ENCODE measurements at regions of chr9 and their contacts with region 1.

Region 1: GRCh38 chr9:111298731-111299598 is 31.1 kb downstream of the OR2K2 start:
- DNase-seq: peak; percentile 21
- H3K4me3 Mint-ChIP-seq: no peak overlapping the region
- H3K27ac Mint-ChIP-seq: no peak overlapping the region
- H3K4me1 Mint-ChIP-seq: no peaks in the 10 kb centered on the region
- H3K27me3 Mint-ChIP-seq: no peaks in the 10 kb centered on the region
- CTCF ChIP-seq: peak; percentile 46

Region 2: DNA sequence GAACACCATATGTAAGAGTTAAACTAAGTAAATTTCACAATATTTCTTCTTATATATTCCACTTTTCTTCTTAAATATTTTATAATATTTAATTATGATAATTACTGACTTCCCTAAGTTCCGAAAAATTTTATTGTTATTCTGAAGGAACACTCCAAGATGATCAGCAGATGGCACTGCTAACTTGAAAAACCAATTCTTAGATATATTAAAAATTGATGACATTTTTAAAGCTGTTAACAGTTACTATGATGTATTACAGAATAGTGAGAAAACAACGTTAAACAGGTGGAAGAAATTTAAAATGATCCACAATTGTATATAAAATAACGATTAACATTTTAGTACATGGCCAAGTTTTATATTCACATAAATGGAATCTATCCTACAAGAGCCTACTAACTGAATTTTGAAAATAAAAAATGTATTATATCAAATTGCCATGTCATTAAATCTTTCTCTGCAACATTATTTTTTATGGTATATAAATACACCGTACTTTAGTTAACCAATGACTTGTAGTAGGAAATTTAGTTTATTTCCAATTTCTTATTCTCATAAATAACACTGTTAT is 660.5 kb before region 1 on chr9:
- CTCF ChIA-PET with region 1: no interaction called
- intact Hi-C with region 1: loop called (anchors 1 kb)
- DNase-seq: no peak
- H3K4me3 Mint-ChIP-seq: no peak overlapping the region
- H3K27ac Mint-ChIP-seq: no peak overlapping the region
- H3K4me1 Mint-ChIP-seq: no peaks in the 10 kb centered on the region
- H3K27me3 Mint-ChIP-seq: no peaks in the 10 kb centered on the region
- CTCF ChIP-seq: no peak

Region 3: GRCh38 chr9:110842169-110842568 is 456.8 kb before region 1 on chr9:
- CTCF ChIA-PET with region 1: no interaction called
- intact Hi-C with region 1: loop called (anchors 10 kb)
- DNase-seq: no peak
- H3K4me3 Mint-ChIP-seq: no peak overlapping the region
- H3K27ac Mint-ChIP-seq: no peak overlapping the region
- H3K4me1 Mint-ChIP-seq: peaks cover 10% of the 10 kb centered on the region
- H3K27me3 Mint-ChIP-seq: no peaks in the 10 kb centered on the region
- CTCF ChIP-seq: no peak

Region 4: DNA sequence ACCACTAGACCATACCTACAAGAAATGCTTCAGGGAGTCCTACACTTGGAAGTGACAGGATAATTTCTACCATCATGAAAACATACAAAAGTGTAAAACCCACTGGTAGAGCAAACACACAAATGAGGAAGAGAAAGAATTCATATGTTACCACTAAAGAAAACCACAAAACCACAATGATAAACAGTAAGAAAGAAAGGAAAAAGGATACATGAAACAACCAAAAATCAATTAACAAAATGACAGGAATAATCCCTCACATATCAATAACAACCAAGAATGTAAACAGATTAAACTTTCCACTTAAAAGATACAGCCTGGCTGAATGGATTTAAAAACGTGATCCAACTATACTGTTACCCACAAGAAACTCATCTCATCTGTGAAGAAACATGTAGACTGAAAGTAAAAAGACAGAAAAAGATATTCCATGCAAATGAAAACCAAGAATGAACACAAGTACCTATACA is 344.1 kb before region 1 on chr9:
- CTCF ChIA-PET with region 1: no interaction called
- intact Hi-C with region 1: loop called (anchors 10 kb)
- DNase-seq: no peak
- H3K4me3 Mint-ChIP-seq: no peak overlapping the region
- H3K27ac Mint-ChIP-seq: no peak overlapping the region
- H3K4me1 Mint-ChIP-seq: peaks cover 15% of the 10 kb centered on the region
- H3K27me3 Mint-ChIP-seq: no peaks in the 10 kb centered on the region
- CTCF ChIP-seq: no peak

Region 5: DNA sequence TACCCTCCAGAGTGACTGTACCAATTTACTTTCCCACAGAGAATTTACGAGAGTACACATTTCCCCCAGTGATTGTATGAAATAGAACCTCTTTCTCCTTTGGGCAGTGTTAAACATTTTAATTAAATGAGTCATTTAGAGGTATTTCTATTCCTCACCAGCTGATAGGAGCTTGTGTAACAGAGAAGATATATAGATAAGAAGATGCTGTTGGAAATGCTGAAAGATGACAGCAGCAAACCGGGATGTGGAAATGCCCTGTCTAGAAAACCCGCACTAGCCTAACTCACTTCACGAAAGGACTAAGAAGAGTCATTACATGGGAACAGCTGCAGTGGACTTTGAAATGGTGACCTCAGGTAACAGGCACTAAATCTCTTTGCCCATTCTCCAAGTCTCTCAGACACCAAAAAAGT is 329.0 kb before region 1 on chr9:
- CTCF ChIA-PET with region 1: no interaction called
- intact Hi-C with region 1: no loop called
- DNase-seq: no peak
- H3K4me3 Mint-ChIP-seq: no peak overlapping the region
- H3K27ac Mint-ChIP-seq: peak overlapping the region; percentile 38
- H3K4me1 Mint-ChIP-seq: peaks cover 8% of the 10 kb centered on the region
- H3K27me3 Mint-ChIP-seq: no peaks in the 10 kb centered on the region
- CTCF ChIP-seq: no peak

Region 6: GRCh38 chr9:111037381-111038305 is 261.3 kb before region 1 on chr9:
- CTCF ChIA-PET with region 1: no interaction called
- intact Hi-C with region 1: loop called (anchors 2 kb)
- DNase-seq: peak; percentile 56
- H3K4me3 Mint-ChIP-seq: peak overlapping the region; percentile 78
- H3K27ac Mint-ChIP-seq: peak overlapping the region; percentile 42
- H3K4me1 Mint-ChIP-seq: peaks cover 21% of the 10 kb centered on the region
- H3K27me3 Mint-ChIP-seq: no peaks in the 10 kb centered on the region
- CTCF ChIP-seq: no peak

Region 7: GRCh38 chr9:111456529-111456928 is 157.6 kb after region 1 on chr9:
- CTCF ChIA-PET with region 1: no interaction called
- intact Hi-C with region 1: no loop called
- DNase-seq: no peak
- H3K4me3 Mint-ChIP-seq: no peak overlapping the region
- H3K27ac Mint-ChIP-seq: no peak overlapping the region
- H3K4me1 Mint-ChIP-seq: peaks cover 18% of the 10 kb centered on the region
- H3K27me3 Mint-ChIP-seq: no peaks in the 10 kb centered on the region
- CTCF ChIP-seq: no peak

Measured in Calu3 (cell line).